ENCODE measurements at regions of chr3 and their contacts with region 1.

Region 1: GRCh38 chr3:187046033-187046432 is 93.3 kb downstream of the RPL39L start:
- DNase-seq: no peak
- H3K4me3 ChIP-seq: no peak overlapping the region
- H3K27me3 ChIP-seq: no peaks in the 10 kb centered on the region; the same call in 1 of the 2 replicates
- CTCF ChIP-seq: no peak

Region 2: GRCh38 chr3:186806089-186807055 is 239.7 kb before region 1 on chr3 and contains the start of gene RFC4:
- CTCF ChIA-PET with region 1: no interaction called
- POLR2A ChIA-PET with region 1: no interaction called
- DNase-seq: no peak
- H3K4me3 ChIP-seq: peak within 1 kb of the TSS; percentile 87
- H3K27me3 ChIP-seq: no peaks in the 10 kb centered on the region
- CTCF ChIP-seq: no peak
- polyA plus RNA-seq, gene RFC4: 6.9 and 8.5 TPM in 2 replicates

Region 3: DNA sequence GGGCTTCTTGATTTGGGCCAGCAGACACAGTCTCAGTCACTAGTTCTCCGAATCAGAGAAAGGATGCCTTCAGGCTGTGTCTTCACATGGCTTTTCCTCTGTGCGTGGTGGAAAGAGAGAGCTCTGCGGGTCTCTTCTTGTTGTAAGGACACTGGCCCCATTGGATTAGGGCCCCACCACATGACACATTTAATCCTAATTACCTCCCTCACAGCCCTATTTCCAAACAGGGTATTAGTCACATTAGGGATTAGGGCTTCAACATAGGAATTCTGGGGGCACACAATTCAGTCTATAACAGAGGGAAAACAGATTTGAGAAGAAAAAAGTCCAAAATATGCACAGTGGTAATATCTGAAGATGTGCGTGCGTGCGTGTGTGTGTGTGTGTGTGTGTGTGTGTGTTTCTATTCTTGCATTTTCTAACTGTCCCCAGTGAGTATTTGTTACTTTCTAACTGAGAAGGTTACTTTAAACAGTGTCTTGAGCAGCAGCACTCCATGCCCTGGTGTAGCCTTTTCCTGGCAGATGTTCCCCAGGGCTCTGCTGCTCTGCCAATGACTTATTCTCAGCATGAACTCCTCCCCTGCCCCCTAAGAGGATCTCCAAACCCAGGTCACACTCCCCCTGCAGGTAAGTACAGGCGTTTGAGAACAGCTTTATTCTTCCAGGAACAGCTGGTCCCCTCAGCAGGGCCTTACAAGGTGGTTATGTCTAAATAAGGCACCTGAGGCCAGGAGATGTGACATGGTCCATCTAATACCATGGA is 20.4 kb after region 1 on chr3:
- CTCF ChIA-PET with region 1: no interaction called
- POLR2A ChIA-PET with region 1: interaction called, 15 read pairs
- DNase-seq: no peak
- H3K4me3 ChIP-seq: no peak overlapping the region
- H3K27me3 ChIP-seq: no peaks in the 10 kb centered on the region
- CTCF ChIP-seq: peak; percentile 22; the same call in 1 of the 2 replicates

Region 4: GRCh38 chr3:187101184-187102072 is 55.4 kb after region 1 on chr3:
- CTCF ChIA-PET with region 1: no interaction called
- POLR2A ChIA-PET with region 1: no interaction called
- DNase-seq: peak; percentile 37
- H3K4me3 ChIP-seq: peak overlapping the region; percentile 22
- H3K27me3 ChIP-seq: no peaks in the 10 kb centered on the region
- CTCF ChIP-seq: no peak

Measured in BJ (cell line).